Common myeloid progenitor, CD34-positive (primary cell): ENCODE measurements at regions of chr21 and their contacts with region 1.

Region 1: DNA sequence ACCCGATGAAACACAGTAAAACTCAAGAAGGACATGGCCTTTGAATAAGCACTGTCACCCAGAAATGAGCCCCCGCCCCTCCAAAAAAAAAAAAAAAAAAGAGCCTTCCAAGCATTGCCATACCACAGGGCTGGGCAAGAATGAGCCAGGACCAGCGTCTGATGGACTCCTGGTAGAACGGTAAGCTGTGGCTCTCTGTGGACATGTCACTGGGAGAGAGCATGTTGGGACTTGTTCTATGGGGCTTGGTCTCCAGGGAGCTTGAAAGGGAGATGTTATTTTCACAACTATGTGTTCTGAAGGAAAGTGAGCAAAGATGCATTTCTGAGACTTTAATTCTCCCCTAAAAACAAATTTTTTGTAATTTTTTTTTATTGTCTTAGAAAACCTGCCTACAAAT is 6.4 kb downstream of the CLIC6 start:
- DNase-seq: no peak
- H3K4me3 ChIP-seq: no peak overlapping the region
- H3K27ac ChIP-seq: no peak overlapping the region
- H3K4me1 ChIP-seq: peaks cover 0 to 7% (median 6%) of the 10 kb centered on the region in 4 experiments
- H3K27me3 ChIP-seq: peaks cover 5 to 44% (median 21%) of the 10 kb centered on the region in 5 experiments

Region 2: GRCh38 chr21:34688145-34688544 is 13.0 kb after region 1 on chr21:
- CTCF ChIA-PET with region 1: interaction called, 23 read pairs
- POLR2A ChIA-PET with region 1: no interaction called
- DNase-seq: peak in 1 of 3 donors; percentile 36
- H3K4me3 ChIP-seq: no peak overlapping the region
- H3K27ac ChIP-seq: no peak overlapping the region
- H3K4me1 ChIP-seq: peaks cover 0 to 2% (median 0%) of the 10 kb centered on the region in 4 experiments
- H3K27me3 ChIP-seq: peaks cover 0 to 7% (median 2%) of the 10 kb centered on the region in 5 experiments

Region 3: DNA sequence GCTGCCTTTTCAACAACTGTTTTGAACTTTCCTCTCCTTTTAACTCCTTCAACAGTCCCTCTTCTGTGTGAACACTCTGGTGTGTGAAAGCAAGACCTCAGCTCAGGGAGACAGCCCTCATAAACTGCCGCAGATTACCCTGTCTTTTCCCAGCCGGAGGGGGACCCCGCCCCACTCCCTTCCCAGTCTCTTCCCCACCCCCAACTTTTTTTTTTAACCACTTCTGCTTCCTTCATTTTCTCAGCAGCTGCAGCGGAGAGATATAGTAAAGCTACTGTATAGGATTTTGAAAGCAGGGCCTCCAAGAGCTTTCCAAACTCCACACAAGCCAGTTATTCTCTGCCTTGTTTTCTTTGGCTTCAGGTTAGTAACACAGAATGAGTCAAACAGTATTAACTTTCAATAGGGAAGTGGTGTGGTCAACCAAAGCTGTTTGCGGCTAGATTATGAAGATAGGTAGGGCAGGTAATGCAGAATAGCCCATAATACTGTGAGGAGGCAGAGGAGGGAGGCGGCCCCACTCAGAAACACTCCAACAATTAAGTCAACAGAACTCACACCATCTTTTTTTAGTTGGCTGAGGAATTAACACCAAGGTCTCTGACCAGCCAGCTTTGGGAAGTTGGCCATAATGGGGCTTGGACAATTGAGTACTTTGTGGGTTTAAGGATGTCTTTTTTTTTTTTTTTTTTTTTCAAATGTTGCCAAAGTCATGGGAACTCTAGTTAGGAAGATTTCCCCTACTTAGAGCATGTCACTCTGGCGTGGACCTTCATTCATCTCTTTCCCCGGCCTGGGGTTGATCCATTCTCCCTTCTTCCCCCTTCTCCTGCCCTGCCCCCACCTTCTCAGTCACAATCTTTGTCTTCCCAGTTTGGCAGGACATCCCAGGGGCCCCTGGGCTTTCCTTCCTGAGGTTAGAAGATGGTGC is 170.6 kb after region 1 on chr21:
- CTCF ChIA-PET with region 1: no interaction called
- POLR2A ChIA-PET with region 1: no interaction called
- DNase-seq: peak; percentile 36 to 87 (median 83)
- H3K4me3 ChIP-seq: peak overlapping the region in 1 of 7 experiments; percentile 17
- H3K27ac ChIP-seq: peak overlapping the region in 1 of 2 experiments; percentile 37
- H3K4me1 ChIP-seq: peaks cover 13 to 35% (median 25%) of the 10 kb centered on the region in 4 experiments
- H3K27me3 ChIP-seq: no peaks in the 10 kb centered on the region

Region 4: DNA sequence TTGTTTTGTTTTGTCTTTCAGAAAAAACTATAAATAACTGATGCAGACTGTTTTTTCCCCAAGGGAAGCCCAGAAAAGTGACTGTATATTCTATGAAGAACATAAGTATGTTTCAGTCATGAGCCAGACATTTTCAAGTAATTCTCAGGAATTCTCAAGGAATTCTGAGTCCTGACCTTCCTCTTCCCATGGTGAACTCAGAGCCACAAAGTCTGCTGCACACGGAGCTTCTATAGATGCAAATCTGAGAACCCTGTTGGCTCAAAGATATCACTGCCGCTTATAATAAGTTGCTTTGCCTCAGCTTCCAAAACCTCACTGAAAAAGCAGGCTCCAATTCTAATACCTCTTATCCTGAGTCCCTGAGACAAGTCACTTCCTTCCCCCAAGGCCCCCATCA is 792.4 kb after region 1 on chr21:
- CTCF ChIA-PET with region 1: no interaction called
- POLR2A ChIA-PET with region 1: no interaction called
- DNase-seq: no peak
- H3K4me3 ChIP-seq: no peak overlapping the region
- H3K27ac ChIP-seq: no peak overlapping the region
- H3K4me1 ChIP-seq: peaks cover 0 to 24% (median 7%) of the 10 kb centered on the region in 4 experiments
- H3K27me3 ChIP-seq: no peaks in the 10 kb centered on the region